Naive thymus-derived CD4-positive, alpha-beta T cell (primary cell): ENCODE measurements at regions of chr21 and their contacts with region 1.

Region 1: GRCh38 chr21:30044445-30045064 is 104.8 kb upstream of the GRIK1 start:
- DNase-seq: peak in 3 of 9 donors; percentile 3 to 19 (median 6)
- ATAC-seq: no peak
- H3K4me3 ChIP-seq: no peak overlapping the region
- H3K4me3 Mint-ChIP-seq: no peak overlapping the region
- H3K27ac ChIP-seq: no peak overlapping the region
- H3K27ac Mint-ChIP-seq: no peak overlapping the region
- H3K4me1 ChIP-seq: no peaks in the 10 kb centered on the region
- H3K4me1 Mint-ChIP-seq: no peaks in the 10 kb centered on the region
- H3K27me3 ChIP-seq: no peaks in the 10 kb centered on the region
- H3K27me3 Mint-ChIP-seq: peaks cover 0 to 12% (median 8%) of the 10 kb centered on the region in 5 donors

Region 2: DNA sequence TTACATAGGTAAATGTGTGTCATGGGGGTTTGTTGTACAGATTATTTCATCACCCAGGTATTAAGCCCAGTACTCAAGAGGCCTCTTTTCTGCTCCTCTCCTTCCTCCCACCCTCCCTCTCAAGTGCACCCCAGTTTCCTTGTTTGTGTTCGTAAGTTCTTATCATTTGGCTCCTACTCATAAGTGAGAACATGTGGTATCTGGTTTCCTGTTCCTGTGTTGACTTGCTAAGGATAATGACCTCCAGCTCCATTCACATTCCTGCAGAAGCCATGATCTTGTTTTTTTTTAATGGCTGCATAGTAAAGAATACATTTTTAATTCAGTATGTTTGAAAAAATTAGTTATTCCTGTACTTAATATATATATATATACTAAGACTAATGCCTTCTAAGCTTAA is 14.4 kb after region 1 on chr21:
- CTCF ChIA-PET with region 1: no interaction called
- POLR2A ChIA-PET with region 1: no interaction called
- intact Hi-C with region 1: no loop called
- DNase-seq: no peak
- ATAC-seq: no peak
- H3K4me3 ChIP-seq: no peak overlapping the region
- H3K4me3 Mint-ChIP-seq: no peak overlapping the region
- H3K27ac ChIP-seq: no peak overlapping the region
- H3K27ac Mint-ChIP-seq: no peak overlapping the region
- H3K4me1 ChIP-seq: no peaks in the 10 kb centered on the region
- H3K4me1 Mint-ChIP-seq: no peaks in the 10 kb centered on the region
- H3K27me3 ChIP-seq: no peaks in the 10 kb centered on the region
- H3K27me3 Mint-ChIP-seq: peaks cover 0 to 14% (median 0%) of the 10 kb centered on the region in 5 donors

Region 3: DNA sequence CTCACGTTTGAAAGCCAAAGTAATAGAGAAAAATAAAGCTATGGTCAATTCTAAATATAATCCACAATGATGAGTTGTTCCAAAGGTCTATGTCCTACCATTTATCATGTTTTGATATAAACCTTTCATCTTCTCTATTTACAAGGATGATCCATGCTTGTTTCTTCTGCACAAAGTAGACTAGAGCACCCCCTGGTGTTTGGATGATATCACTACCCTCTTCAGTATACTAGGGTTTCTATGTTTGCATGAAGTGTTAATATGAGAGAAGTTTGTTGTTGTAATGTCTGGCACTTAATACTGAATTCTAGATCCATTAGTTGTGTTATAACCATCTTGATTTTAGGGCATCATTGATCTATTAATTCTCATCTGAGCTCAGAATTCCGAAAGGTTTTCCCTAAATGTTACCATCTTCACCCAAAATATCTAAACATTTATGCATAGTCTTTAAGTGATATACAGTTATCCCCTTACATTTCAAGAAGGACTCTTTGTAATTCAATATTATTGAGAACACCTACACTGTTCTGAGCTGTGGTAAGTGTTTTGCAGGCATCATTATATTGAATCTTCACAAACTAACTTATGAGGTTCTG is 150.2 kb after region 1 on chr21:
- CTCF ChIA-PET with region 1: no interaction called
- POLR2A ChIA-PET with region 1: no interaction called
- intact Hi-C with region 1: loop called in 1 of 2 experiments (anchors 10 kb)
- DNase-seq: no peak
- ATAC-seq: no peak
- H3K4me3 ChIP-seq: no peak overlapping the region
- H3K4me3 Mint-ChIP-seq: no peak overlapping the region
- H3K27ac ChIP-seq: no peak overlapping the region
- H3K27ac Mint-ChIP-seq: no peak overlapping the region
- H3K4me1 ChIP-seq: no peaks in the 10 kb centered on the region
- H3K4me1 Mint-ChIP-seq: no peaks in the 10 kb centered on the region
- H3K27me3 ChIP-seq: no peaks in the 10 kb centered on the region
- H3K27me3 Mint-ChIP-seq: peaks cover 0 to 21% (median 0%) of the 10 kb centered on the region in 5 donors